Psoas muscle (tissue), 8 donors: ENCODE measurements at regions of chr4 and their contacts with region 1.

Region 1: DNA sequence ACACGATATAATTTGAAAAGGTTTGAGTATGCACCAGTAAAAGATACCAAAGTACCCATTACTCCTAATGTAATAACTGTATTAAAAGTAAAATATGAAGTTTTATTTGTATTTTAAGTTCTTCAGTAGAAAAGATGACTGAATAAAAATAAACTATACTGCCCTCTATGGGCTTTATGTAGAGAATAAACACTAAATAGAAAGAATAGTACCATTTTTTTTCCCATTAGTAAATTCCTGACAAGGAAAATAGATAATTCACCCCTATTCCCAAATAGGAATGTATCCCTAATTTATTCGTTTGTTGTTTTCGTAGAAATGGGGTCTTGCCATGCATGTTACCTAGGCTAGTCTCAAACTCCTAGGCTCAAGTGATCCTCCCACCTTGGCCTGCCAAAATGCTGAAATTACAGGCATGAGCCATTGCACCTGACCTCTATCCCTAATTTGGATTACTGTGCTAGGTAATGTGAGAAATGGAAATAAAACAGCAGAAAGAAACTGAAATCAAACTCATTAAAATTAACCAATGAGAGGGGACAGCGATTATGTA is 73.6 kb upstream of the COX18 start:
- DNase-seq: no peak
- ATAC-seq: no peak
- H3K4me3 ChIP-seq: no peak overlapping the region
- H3K27ac ChIP-seq: no peak overlapping the region
- H3K4me1 ChIP-seq: peaks cover 6% of the 10 kb centered on the region
- H3K27me3 ChIP-seq: no peaks in the 10 kb centered on the region
- CTCF ChIP-seq: peak; percentile 10

Region 2: GRCh38 chr4:71635139-71635748 is 1507.8 kb before region 1 on chr4:
- intact Hi-C with region 1: no loop called
- DNase-seq: no peak
- ATAC-seq: no peak
- H3K4me3 ChIP-seq: no peak overlapping the region
- H3K27ac ChIP-seq: no peak overlapping the region
- H3K4me1 ChIP-seq: no peaks in the 10 kb centered on the region
- H3K27me3 ChIP-seq: no peaks in the 10 kb centered on the region
- CTCF ChIP-seq: no peak

Region 3: DNA sequence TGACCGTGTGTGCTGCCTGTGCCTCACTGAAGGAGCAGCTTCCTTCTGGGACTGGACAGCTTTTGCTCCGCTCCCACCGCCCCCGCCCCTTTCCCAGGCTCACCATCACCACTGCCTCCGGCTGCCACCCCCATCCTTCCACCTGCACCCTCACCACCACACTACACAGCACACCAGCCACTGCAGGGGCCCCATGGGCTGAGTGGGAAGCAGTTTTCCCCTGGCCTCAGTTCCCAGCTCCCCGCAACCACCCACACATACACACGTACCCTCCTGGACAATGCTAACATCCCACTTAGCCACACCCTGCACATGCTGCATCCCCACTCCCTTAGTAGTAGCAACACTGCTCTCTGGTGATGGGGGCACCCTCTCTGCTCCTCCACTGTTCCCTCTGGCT is 43.9 kb before region 1 on chr4:
- intact Hi-C with region 1: loop called in 1 of 2 experiments (anchors 10 kb)
- DNase-seq: no peak
- ATAC-seq: peak in 3 of 4 donors; percentile 24 to 42 (median 24)
- H3K4me3 ChIP-seq: no peak overlapping the region
- H3K27ac ChIP-seq: no peak overlapping the region
- H3K4me1 ChIP-seq: no peaks in the 10 kb centered on the region
- H3K27me3 ChIP-seq: no peaks in the 10 kb centered on the region
- CTCF ChIP-seq: no peak

Region 4: DNA sequence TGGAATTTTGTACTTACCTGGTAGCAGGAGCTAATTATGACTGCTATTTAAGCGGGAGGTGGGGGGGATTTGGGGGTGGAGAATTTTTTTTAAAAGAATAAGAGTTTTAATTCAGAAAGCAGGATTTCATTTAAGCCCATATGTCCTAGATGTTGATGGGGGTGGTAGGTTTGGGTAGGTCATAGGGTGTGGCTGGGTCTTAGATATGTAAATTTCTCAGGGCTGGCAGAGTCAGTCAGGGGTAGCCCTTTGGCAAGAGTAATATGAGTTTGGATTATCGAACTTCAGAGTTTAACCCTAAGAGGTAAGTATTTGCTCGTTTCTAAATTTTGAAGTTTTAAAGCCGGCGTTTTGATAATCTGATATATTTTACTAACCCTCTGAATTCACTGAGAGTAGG is 38.4 kb before region 1 on chr4:
- intact Hi-C with region 1: loop called (anchors 5 to 10 kb)
- DNase-seq: no peak
- ATAC-seq: no peak
- H3K4me3 ChIP-seq: no peak overlapping the region
- H3K27ac ChIP-seq: no peak overlapping the region
- H3K4me1 ChIP-seq: no peaks in the 10 kb centered on the region
- H3K27me3 ChIP-seq: no peaks in the 10 kb centered on the region
- CTCF ChIP-seq: no peak

Region 5: GRCh38 chr4:73181231-73181630 is 38.2 kb after region 1 on chr4:
- intact Hi-C with region 1: no loop called
- DNase-seq: no peak
- ATAC-seq: no peak
- H3K4me3 ChIP-seq: no peak overlapping the region
- H3K27ac ChIP-seq: no peak overlapping the region
- H3K4me1 ChIP-seq: peaks cover 42% of the 10 kb centered on the region
- H3K27me3 ChIP-seq: no peaks in the 10 kb centered on the region
- CTCF ChIP-seq: no peak